CD4-positive, alpha-beta memory T cell (primary cell): ENCODE measurements at regions of chr15 and their contacts with region 1.

Region 1: GRCh38 chr15:78909791-78910228 is 35.0 kb downstream of the CTSH start:
- DNase-seq: peak in 4 of 5 donors; percentile 14 to 30 (median 20)
- H3K4me3 ChIP-seq: no peak overlapping the region
- H3K4me3 Mint-ChIP-seq: no peak overlapping the region
- H3K27ac ChIP-seq: no peak overlapping the region
- H3K27ac Mint-ChIP-seq: peak overlapping the region in 6 of 7 donors; percentile 24 to 82 (median 47)
- H3K4me1 ChIP-seq: peaks cover 6% of the 10 kb centered on the region
- H3K4me1 Mint-ChIP-seq: peaks cover 22 to 31% (median 28%) of the 10 kb centered on the region in 4 donors
- H3K27me3 ChIP-seq: no peaks in the 10 kb centered on the region
- H3K27me3 Mint-ChIP-seq: no peaks in the 10 kb centered on the region

Region 2: DNA sequence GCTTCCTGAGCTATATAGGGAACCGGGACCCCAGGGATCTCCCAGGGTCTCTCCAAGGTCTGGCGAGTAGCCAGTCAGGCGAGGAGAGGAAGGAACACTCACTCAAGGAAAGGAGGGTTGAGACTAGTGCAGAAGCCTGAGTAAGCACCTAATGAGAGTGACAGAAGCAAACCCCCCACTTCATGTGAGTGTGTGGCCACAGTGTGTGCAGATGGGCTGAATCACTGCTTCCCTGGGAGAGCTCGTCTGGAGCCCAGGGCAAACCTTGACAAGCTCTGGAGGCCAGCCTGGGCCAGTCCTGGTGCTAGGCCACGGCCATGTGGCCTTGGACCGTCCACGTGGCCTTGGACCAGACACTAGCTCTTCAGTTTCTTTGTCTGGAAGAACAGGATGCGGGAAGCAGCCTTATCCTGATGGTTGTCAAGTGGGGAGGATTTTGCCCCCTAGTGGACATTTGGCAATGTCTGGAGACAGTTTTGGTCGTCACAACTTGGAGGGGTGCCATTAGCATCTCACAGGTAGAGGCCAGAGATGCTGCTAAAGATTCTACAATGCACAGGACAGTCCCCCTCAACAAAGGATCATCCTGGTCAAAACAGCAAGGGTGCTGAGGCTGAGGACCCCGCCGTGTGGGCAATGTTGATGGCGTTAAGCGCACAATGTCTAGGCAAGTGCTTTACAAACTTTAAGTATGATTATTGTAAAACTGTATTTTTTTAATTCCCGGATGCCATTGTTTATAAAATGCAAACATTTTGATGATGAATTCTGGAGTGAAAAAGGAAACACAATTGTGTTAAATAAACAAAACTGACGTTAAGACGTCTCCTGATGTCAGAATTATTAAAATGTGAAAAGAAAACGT is 69.9 kb after region 1 on chr15:
- CTCF ChIA-PET with region 1: interaction called, 28 read pairs
- POLR2A ChIA-PET with region 1: no interaction called
- intact Hi-C with region 1: loop called (anchors 1 kb)
- DNase-seq: peak in 4 of 5 donors; percentile 34 to 37 (median 37)
- H3K4me3 ChIP-seq: no peak overlapping the region
- H3K4me3 Mint-ChIP-seq: no peak overlapping the region
- H3K27ac ChIP-seq: no peak overlapping the region
- H3K27ac Mint-ChIP-seq: no peak overlapping the region
- H3K4me1 ChIP-seq: peaks cover 3% of the 10 kb centered on the region
- H3K4me1 Mint-ChIP-seq: peaks cover 0 to 7% (median 5%) of the 10 kb centered on the region in 4 donors
- H3K27me3 ChIP-seq: no peaks in the 10 kb centered on the region
- H3K27me3 Mint-ChIP-seq: peaks cover 0 to 3% of the 10 kb centered on the region in 2 donors